CD4-positive, alpha-beta T cell (primary cell): ENCODE measurements at regions of chrX and their contacts with region 1.

Region 1: GRCh38 chrX:118847676-118848075 is 24.1 kb downstream of the ZCCHC12 start:
- DNase-seq: peak in 3 of 14 experiments; percentile 50 to 68 (median 64)
- ATAC-seq: peak; percentile 32
- H3K4me3 ChIP-seq: no peak overlapping the region
- H3K4me3 Mint-ChIP-seq: no peak overlapping the region
- H3K27ac ChIP-seq: no peak overlapping the region
- H3K27ac Mint-ChIP-seq: no peak overlapping the region
- H3K4me1 ChIP-seq: no peaks in the 10 kb centered on the region
- H3K4me1 Mint-ChIP-seq: no peaks in the 10 kb centered on the region
- H3K27me3 ChIP-seq: no peaks in the 10 kb centered on the region
- H3K27me3 Mint-ChIP-seq: peaks cover 4% of the 10 kb centered on the region
- CTCF ChIP-seq: peak; percentile 66

Region 2: DNA sequence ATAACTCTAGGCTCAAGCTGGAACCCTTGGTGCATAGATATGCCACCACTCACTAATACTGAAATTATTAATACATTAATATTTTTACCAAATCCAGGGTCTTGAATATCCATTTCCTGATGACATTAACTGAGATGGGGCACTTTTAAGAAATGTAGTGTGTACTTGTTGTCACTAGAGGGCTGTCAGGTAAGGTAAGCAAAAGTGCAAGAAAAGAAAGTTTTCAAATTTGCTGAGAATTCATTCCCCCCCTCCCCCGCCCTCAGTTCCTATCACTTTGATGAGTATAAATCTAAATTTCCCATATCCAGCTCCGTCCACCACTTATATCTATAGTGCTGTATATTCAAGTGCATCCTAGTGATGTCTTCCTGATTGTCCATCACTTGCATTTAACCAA is 522.2 kb before region 1 on chrX:
- CTCF ChIA-PET with region 1: no interaction called
- POLR2A ChIA-PET with region 1: no interaction called
- intact Hi-C with region 1: no loop called
- DNase-seq: peak in 2 of 14 experiments; percentile 7 to 17
- ATAC-seq: no peak
- H3K4me3 ChIP-seq: no peak overlapping the region
- H3K4me3 Mint-ChIP-seq: no peak overlapping the region
- H3K27ac ChIP-seq: no peak overlapping the region
- H3K27ac Mint-ChIP-seq: no peak overlapping the region
- H3K4me1 ChIP-seq: no peaks in the 10 kb centered on the region
- H3K4me1 Mint-ChIP-seq: no peaks in the 10 kb centered on the region
- H3K27me3 ChIP-seq: no peaks in the 10 kb centered on the region
- H3K27me3 Mint-ChIP-seq: no peaks in the 10 kb centered on the region
- CTCF ChIP-seq: peak; percentile 13

Region 3: DNA sequence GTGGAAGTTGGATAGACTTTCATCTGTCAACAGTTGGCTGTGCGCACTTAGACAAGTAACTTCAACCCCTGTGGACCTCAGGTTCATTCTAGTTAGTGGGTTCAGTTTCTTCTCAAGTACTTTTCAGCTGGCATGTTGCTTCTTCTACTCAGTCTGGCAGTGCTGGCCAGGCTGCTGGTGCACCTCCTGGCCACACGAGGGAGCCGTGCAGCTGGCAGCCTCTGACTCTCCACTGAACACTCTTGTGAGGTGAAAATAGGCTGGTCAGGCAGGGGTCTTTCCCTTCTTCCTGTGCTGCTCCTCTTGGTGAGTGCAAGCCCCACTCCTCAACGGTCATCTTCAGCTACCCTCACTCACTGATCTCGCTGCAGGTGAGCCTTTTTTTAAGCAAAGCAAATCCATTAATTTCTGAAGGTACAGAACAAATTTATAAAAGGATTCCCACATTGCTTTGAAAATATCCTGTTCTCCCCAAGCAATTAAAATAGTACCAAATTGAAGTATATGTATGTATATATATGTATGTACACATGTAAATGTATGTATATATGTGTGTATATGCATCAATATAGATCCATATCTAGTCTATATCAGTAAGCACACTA is 157.3 kb after region 1 on chrX:
- CTCF ChIA-PET with region 1: no interaction called
- POLR2A ChIA-PET with region 1: no interaction called
- intact Hi-C with region 1: loop called (anchors 1 to 2 kb)
- DNase-seq: peak; percentile 8 to 68 (median 44)
- ATAC-seq: peak; percentile 77
- H3K4me3 ChIP-seq: no peak overlapping the region
- H3K4me3 Mint-ChIP-seq: no peak overlapping the region
- H3K27ac ChIP-seq: no peak overlapping the region
- H3K27ac Mint-ChIP-seq: no peak overlapping the region
- H3K4me1 ChIP-seq: no peaks in the 10 kb centered on the region
- H3K4me1 Mint-ChIP-seq: peaks cover 22% of the 10 kb centered on the region
- H3K27me3 ChIP-seq: no peaks in the 10 kb centered on the region
- H3K27me3 Mint-ChIP-seq: no peaks in the 10 kb centered on the region
- CTCF ChIP-seq: peak; percentile 70

Region 4: DNA sequence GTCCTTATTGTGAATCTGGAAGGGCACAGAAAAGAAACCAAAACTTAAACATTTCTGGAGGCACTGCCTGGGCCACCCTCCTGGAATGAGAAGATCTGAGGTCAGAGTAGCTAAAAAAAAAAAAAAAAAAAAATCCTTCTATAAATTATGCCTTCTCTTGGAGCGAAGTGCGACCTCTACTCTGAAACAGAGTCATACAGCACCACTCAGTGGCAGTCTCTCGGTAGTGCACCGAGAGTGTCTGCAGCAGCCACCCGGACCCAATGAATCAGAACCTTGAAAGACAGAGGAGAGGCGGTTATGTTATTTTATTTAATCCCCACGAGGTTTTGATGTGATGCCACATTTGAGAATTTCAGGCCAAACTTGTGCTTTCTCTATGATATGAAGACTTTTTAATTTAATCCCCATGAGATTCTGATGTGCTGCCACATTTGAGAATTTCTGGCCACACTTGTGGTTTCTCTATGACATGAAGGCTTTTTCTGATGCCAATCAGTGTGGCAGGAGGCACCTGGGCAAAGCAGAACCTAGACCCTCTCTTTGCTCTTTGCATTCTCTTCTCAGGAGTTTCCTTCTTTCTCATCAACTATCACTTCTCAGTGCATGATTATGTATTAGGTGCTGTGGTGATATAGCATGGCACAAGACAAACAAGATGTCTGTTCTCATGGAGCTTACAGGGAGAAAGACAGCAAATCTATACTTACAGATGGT is 219.5 kb after region 1 on chrX:
- CTCF ChIA-PET with region 1: no interaction called
- POLR2A ChIA-PET with region 1: no interaction called
- intact Hi-C with region 1: loop called (anchors 1 to 2 kb)
- DNase-seq: peak in 13 of 14 experiments; percentile 3 to 61 (median 20)
- ATAC-seq: peak; percentile 43
- H3K4me3 ChIP-seq: no peak overlapping the region
- H3K4me3 Mint-ChIP-seq: no peak overlapping the region
- H3K27ac ChIP-seq: no peak overlapping the region
- H3K27ac Mint-ChIP-seq: no peak overlapping the region
- H3K4me1 ChIP-seq: no peaks in the 10 kb centered on the region
- H3K4me1 Mint-ChIP-seq: no peaks in the 10 kb centered on the region
- H3K27me3 ChIP-seq: no peaks in the 10 kb centered on the region
- H3K27me3 Mint-ChIP-seq: no peaks in the 10 kb centered on the region
- CTCF ChIP-seq: peak; percentile 20

Region 5: GRCh38 chrX:119168104-119168503 is 320.4 kb after region 1 on chrX:
- CTCF ChIA-PET with region 1: no interaction called
- POLR2A ChIA-PET with region 1: no interaction called
- intact Hi-C with region 1: no loop called
- DNase-seq: no peak
- ATAC-seq: no peak
- H3K4me3 ChIP-seq: no peak overlapping the region
- H3K4me3 Mint-ChIP-seq: no peak overlapping the region
- H3K27ac ChIP-seq: no peak overlapping the region
- H3K27ac Mint-ChIP-seq: no peak overlapping the region
- H3K4me1 ChIP-seq: no peaks in the 10 kb centered on the region
- H3K4me1 Mint-ChIP-seq: no peaks in the 10 kb centered on the region
- H3K27me3 ChIP-seq: no peaks in the 10 kb centered on the region
- H3K27me3 Mint-ChIP-seq: peaks cover 4% of the 10 kb centered on the region
- CTCF ChIP-seq: no peak

Region 6: GRCh38 chrX:119211649-119212014 is 364.0 kb after region 1 on chrX:
- CTCF ChIA-PET with region 1: no interaction called
- POLR2A ChIA-PET with region 1: no interaction called
- intact Hi-C with region 1: loop called in 1 of 2 experiments (anchors 5 kb)
- DNase-seq: no peak
- ATAC-seq: no peak
- H3K4me3 ChIP-seq: no peak overlapping the region
- H3K4me3 Mint-ChIP-seq: no peak overlapping the region
- H3K27ac ChIP-seq: no peak overlapping the region
- H3K27ac Mint-ChIP-seq: no peak overlapping the region
- H3K4me1 ChIP-seq: no peaks in the 10 kb centered on the region
- H3K4me1 Mint-ChIP-seq: no peaks in the 10 kb centered on the region
- H3K27me3 ChIP-seq: no peaks in the 10 kb centered on the region
- H3K27me3 Mint-ChIP-seq: peaks cover 5% of the 10 kb centered on the region
- CTCF ChIP-seq: no peak

Region 7: DNA sequence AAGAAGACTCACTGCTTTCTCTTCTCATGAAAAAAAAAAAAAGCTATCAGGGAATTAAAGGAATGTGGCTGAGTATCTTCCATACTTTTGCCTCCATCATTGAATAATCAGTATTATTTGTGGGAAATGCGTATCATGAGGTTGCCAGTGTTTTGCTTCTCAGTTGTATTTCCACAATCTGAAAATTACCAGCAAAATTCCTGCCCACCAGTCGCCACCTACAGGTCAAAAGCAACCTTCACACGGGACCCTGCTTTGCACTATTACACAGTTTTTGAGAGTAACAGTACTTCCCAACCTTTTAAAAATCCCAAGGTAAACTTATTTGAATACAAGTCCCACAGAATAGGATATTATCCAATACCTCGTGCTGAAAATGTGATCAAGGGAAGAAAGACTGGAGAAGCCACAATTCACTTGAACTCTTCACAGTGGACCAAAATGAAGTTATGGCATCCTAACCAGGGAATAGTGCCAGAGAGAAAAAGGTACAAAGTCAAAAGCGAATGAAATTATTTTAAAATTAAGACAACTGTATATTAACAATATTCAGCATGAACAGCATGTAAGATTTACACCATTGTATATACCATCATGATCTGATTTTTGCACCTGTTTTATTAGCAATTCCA is 418.8 kb after region 1 on chrX:
- CTCF ChIA-PET with region 1: no interaction called
- POLR2A ChIA-PET with region 1: no interaction called
- intact Hi-C with region 1: loop called in 1 of 2 experiments (anchors 2 kb)
- DNase-seq: peak in 6 of 14 experiments; percentile 4 to 45 (median 31)
- ATAC-seq: no peak
- H3K4me3 ChIP-seq: no peak overlapping the region
- H3K4me3 Mint-ChIP-seq: no peak overlapping the region
- H3K27ac ChIP-seq: no peak overlapping the region
- H3K27ac Mint-ChIP-seq: no peak overlapping the region
- H3K4me1 ChIP-seq: no peaks in the 10 kb centered on the region
- H3K4me1 Mint-ChIP-seq: no peaks in the 10 kb centered on the region
- H3K27me3 ChIP-seq: peaks cover 0 to 6% of the 10 kb centered on the region in 2 experiments
- H3K27me3 Mint-ChIP-seq: peaks cover 13% of the 10 kb centered on the region
- CTCF ChIP-seq: peak; percentile 49